PC-9 (cell line): ENCODE measurements at regions of chr9 and their contacts with region 1.

Region 1: GRCh38 chr9:4382722-4383317 is 83.0 kb upstream of the GLIS3 start:
- DNase-seq: peak in 1 of 2 experiments; percentile 6
- H3K4me3 ChIP-seq: no peak overlapping the region
- H3K27ac ChIP-seq: no peak overlapping the region
- H3K4me1 ChIP-seq: no peaks in the 10 kb centered on the region
- H3K27me3 ChIP-seq: no peaks in the 10 kb centered on the region
- CTCF ChIP-seq: peak; percentile 75

Region 2: DNA sequence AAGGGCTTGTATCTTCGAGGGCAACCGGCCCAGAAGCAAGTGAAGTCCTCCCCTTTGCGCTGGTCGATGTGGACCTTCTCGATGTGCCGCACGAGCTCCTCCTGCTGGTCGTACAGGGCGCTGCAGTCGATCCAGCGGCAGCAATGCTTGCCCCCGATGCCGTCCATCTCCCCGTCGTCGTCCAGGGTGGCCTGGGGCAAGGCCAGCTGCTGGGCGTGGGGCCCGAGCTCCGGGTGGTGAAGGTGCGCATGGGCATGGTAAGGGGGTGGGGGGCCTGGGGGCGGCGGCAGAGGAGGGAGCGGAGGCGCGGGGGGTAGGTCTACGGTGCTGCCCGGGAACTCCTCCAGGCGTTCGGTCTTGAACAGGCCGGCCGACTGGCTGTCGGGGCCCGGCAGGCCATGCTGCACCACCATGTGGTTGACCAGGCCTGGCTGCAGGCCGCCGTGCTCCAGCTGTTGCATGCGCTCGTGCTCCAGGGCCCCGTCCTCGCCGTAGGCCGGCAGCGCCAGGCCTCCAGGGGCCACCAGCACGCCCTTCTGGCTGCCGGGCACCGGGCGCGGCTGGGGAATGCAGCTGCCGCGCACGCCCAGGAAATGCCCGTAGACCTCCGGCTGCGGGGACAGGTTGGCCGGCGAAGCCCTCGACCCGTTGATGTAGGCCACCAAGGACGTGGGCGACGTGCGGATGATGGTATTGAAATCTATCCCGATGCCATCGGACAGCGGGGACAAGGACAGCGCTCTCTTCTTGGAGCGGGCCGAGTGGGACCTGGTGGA is 264.8 kb before region 1 on chr9:
- CTCF ChIA-PET with region 1: no interaction called
- POLR2A ChIA-PET with region 1: no interaction called
- intact Hi-C with region 1: no loop called
- DNase-seq: no peak
- H3K4me3 ChIP-seq: no peak overlapping the region
- H3K27ac ChIP-seq: no peak overlapping the region
- H3K4me1 ChIP-seq: no peaks in the 10 kb centered on the region
- H3K27me3 ChIP-seq: no peaks in the 10 kb centered on the region
- CTCF ChIP-seq: peak; percentile 25; the same call in 1 of the 2 replicates

Region 3: GRCh38 chr9:4489919-4490704 is 107.3 kb after region 1 on chr9 and contains the start of gene SLC1A1:
- CTCF ChIA-PET with region 1: interaction called, 3 read pairs
- POLR2A ChIA-PET with region 1: no interaction called
- intact Hi-C with region 1: loop called (anchors 5 kb)
- DNase-seq: peak; percentile 61 to 65
- H3K4me3 ChIP-seq: peak within 1 kb of the TSS; percentile 64
- H3K27ac ChIP-seq: 0 out of 2 replicates have a peak within 1 kb of the TSS, but pooled peaks have one; percentile 12
- H3K4me1 ChIP-seq: peaks cover 8% of the 10 kb centered on the region; the same call in 1 of the 2 replicates
- H3K27me3 ChIP-seq: no peaks in the 10 kb centered on the region
- CTCF ChIP-seq: no peak
- total RNA-seq, gene SLC1A1: 2.9 and 3.1 TPM in 2 replicates

Region 4: DNA sequence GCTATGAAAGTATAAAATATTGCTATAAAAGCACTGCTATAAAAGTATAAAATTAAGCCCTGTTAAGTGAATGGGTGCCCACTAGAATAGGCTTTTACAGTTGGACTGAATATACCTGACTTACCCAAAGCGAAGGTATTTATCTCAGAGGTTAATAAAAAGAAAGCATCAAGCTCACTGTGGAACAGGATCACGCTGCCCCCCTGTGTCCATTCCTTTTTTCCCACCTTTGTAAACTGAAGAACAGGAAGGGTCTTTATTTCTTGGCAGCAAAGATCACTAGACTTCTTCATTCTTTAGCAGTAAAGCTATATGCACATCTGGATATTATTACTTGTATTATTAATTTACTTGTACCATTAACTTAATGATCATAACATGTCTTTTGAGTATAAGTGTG is 257.2 kb after region 1 on chr9:
- CTCF ChIA-PET with region 1: interaction called, 3 read pairs
- POLR2A ChIA-PET with region 1: no interaction called
- intact Hi-C with region 1: loop called (anchors 1 kb)
- DNase-seq: peak in 1 of 2 experiments; percentile 11
- H3K4me3 ChIP-seq: no peak overlapping the region
- H3K27ac ChIP-seq: no peak overlapping the region
- H3K4me1 ChIP-seq: no peaks in the 10 kb centered on the region
- H3K27me3 ChIP-seq: no peaks in the 10 kb centered on the region
- CTCF ChIP-seq: peak; percentile 48

Region 5: DNA sequence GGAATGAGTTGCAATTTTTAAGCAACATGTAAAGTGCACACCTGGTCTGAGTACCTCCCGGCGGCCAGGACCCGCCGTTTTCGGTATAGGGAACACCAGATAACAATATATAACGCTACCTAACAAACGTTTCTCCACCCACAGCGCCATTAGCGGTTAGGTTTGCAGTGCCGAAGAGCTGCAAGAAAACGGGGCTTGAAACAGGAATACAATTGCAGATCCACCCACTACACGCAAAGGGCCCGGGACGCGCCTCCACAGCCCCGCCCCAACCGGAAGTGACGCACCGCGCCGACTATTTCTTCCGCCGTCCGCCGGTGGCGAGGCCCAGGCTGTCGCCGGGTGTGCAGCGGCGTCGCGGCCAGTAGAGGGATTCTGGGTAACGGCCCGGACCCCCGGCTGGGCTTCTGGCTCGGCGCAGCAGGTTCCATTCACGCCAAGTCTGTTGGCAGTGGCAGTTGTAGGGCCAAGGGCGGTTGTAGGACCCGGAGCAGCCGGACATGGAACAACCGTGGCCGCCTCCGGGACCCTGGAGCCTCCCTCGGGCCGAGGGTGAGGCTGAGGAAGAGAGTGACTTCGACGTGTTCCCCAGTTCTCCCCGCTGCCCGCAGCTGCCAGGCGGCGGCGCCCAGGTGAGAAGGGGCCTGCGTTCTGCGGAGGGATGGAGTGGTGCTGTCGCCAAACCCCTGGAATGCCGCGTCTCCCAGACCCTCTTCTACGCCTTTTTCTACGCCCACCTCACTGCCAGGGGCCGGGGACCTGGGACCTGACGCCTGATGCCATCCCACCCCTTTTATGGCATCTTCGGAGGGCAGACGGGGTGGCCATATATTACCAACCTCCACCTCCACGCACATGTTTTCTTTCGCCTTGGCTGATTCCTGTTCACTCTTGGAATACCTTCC is 296.7 kb after region 1 on chr9 and contains the start of gene CDC37L1:
- CTCF ChIA-PET with region 1: no interaction called
- POLR2A ChIA-PET with region 1: no interaction called
- intact Hi-C with region 1: loop called (anchors 1 kb)
- DNase-seq: peak; percentile 81 to 93
- H3K4me3 ChIP-seq: peak within 1 kb of the TSS; percentile 87
- H3K27ac ChIP-seq: peak within 1 kb of the TSS; percentile 82
- H3K4me1 ChIP-seq: peaks cover 20% of the 10 kb centered on the region
- H3K27me3 ChIP-seq: no peaks in the 10 kb centered on the region
- CTCF ChIP-seq: peak; percentile 63
- total RNA-seq, gene CDC37L1: 6.7 and 7.7 TPM in 2 replicates

Region 6: GRCh38 chr9:4740638-4741364 is 358.0 kb after region 1 on chr9 and contains the start of gene AK3:
- CTCF ChIA-PET with region 1: no interaction called
- POLR2A ChIA-PET with region 1: no interaction called
- intact Hi-C with region 1: loop called (anchors 10 kb)
- DNase-seq: peak; percentile 63 to 84
- H3K4me3 ChIP-seq: peak within 1 kb of the TSS; percentile 73
- H3K27ac ChIP-seq: peak within 1 kb of the TSS; percentile 49
- H3K4me1 ChIP-seq: peaks cover 16% of the 10 kb centered on the region
- H3K27me3 ChIP-seq: no peaks in the 10 kb centered on the region
- CTCF ChIP-seq: no peak
- total RNA-seq, gene AK3: 34.0 and 36.2 TPM in 2 replicates

Region 7: DNA sequence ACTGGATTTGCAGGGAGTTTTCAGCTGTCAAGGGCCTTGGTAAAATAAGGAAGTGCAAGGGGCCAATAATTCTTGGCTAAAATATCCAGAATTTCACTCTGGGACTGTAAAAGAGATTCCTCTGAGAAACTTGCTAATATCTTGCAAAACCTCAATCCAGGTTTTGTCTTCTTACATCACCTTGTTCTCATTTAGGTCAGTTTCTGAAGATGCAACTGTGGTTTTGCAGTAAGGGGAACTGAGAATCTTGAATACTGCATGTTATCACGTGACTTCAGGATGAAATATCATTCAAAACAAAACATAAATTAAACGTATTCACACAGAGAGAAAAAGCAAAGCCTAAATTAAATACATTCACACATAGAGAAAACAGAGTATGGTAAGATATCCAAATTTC is 1211.1 kb after region 1 on chr9:
- CTCF ChIA-PET with region 1: no interaction called
- POLR2A ChIA-PET with region 1: no interaction called
- intact Hi-C with region 1: loop called (anchors 5 kb)
- DNase-seq: no peak
- H3K4me3 ChIP-seq: no peak overlapping the region
- H3K27ac ChIP-seq: no peak overlapping the region
- H3K4me1 ChIP-seq: no peaks in the 10 kb centered on the region
- H3K27me3 ChIP-seq: no peaks in the 10 kb centered on the region
- CTCF ChIP-seq: no peak

Region 8: GRCh38 chr9:5714501-5715401 is 1331.9 kb after region 1 on chr9:
- CTCF ChIA-PET with region 1: no interaction called
- POLR2A ChIA-PET with region 1: no interaction called
- intact Hi-C with region 1: loop called (anchors 10 kb)
- DNase-seq: peak; percentile 2 to 37
- H3K4me3 ChIP-seq: no peak overlapping the region
- H3K27ac ChIP-seq: no peak overlapping the region
- H3K4me1 ChIP-seq: no peaks in the 10 kb centered on the region
- H3K27me3 ChIP-seq: no peaks in the 10 kb centered on the region
- CTCF ChIP-seq: peak; percentile 58